Naive thymus-derived CD4-positive, alpha-beta T cell (primary cell): ENCODE measurements at regions of chr12 and their contacts with region 1.

Region 1: GRCh38 chr12:54984658-54985376 is at the start of gene TESPA1:
- DNase-seq: peak; percentile 55 to 94 (median 90)
- ATAC-seq: peak; percentile 93
- H3K4me3 ChIP-seq: peak within 1 kb of the TSS; percentile 67
- H3K4me3 Mint-ChIP-seq: peak within 1 kb of the TSS; percentile 90 to 98 (median 95)
- H3K27ac ChIP-seq: peak within 1 kb of the TSS; percentile 94
- H3K27ac Mint-ChIP-seq: peak within 1 kb of the TSS; percentile 95 to 100 (median 98)
- H3K4me1 ChIP-seq: peaks cover 49 to 51% of the 10 kb centered on the region in 2 donors
- H3K4me1 Mint-ChIP-seq: peaks cover 45 to 78% (median 69%) of the 10 kb centered on the region in 7 donors
- H3K27me3 ChIP-seq: no peaks in the 10 kb centered on the region
- H3K27me3 Mint-ChIP-seq: no peaks in the 10 kb centered on the region
- total RNA-seq, gene TESPA1: 120 to 301 (median 186) TPM

Region 2: GRCh38 chr12:54017878-54018467 is 966.8 kb before region 1 on chr12:
- CTCF ChIA-PET with region 1: no interaction called
- POLR2A ChIA-PET with region 1: no interaction called
- intact Hi-C with region 1: no loop called
- DNase-seq: peak; percentile 50 to 73 (median 67)
- ATAC-seq: peak; percentile 86
- H3K4me3 ChIP-seq: peak overlapping the region; percentile 58
- H3K4me3 Mint-ChIP-seq: peak overlapping the region; percentile 69 to 89 (median 84)
- H3K27ac ChIP-seq: no peak overlapping the region
- H3K27ac Mint-ChIP-seq: peak overlapping the region in 2 of 9 donors; percentile 10 to 42
- H3K4me1 ChIP-seq: peaks cover 7 to 15% of the 10 kb centered on the region in 2 donors
- H3K4me1 Mint-ChIP-seq: peaks cover 6 to 33% (median 18%) of the 10 kb centered on the region in 7 donors
- H3K27me3 ChIP-seq: peaks cover 16 to 58% of the 10 kb centered on the region in 2 donors
- H3K27me3 Mint-ChIP-seq: peaks cover 68 to 92% (median 78%) of the 10 kb centered on the region in 5 donors

Region 3: GRCh38 chr12:54740882-54741281 is 243.9 kb before region 1 on chr12:
- CTCF ChIA-PET with region 1: no interaction called
- POLR2A ChIA-PET with region 1: interaction called, 15 read pairs
- intact Hi-C with region 1: no loop called
- DNase-seq: peak in 6 of 9 donors; percentile 26 to 69 (median 52)
- ATAC-seq: peak; percentile 72
- H3K4me3 ChIP-seq: no peak overlapping the region
- H3K4me3 Mint-ChIP-seq: peak overlapping the region; percentile 0 to 71 (median 56)
- H3K27ac ChIP-seq: no peak overlapping the region
- H3K27ac Mint-ChIP-seq: peak overlapping the region; percentile 16 to 81 (median 57)
- H3K4me1 ChIP-seq: peaks cover 44 to 51% of the 10 kb centered on the region in 2 donors
- H3K4me1 Mint-ChIP-seq: peaks cover 29 to 89% (median 72%) of the 10 kb centered on the region in 7 donors
- H3K27me3 ChIP-seq: no peaks in the 10 kb centered on the region
- H3K27me3 Mint-ChIP-seq: peaks cover 0 to 18% (median 0%) of the 10 kb centered on the region in 5 donors

Region 4: GRCh38 chr12:54935235-54935951 is 49.4 kb before region 1 on chr12:
- CTCF ChIA-PET with region 1: no interaction called
- POLR2A ChIA-PET with region 1: interaction called, 22 read pairs
- intact Hi-C with region 1: loop called (anchors 1 to 2 kb)
- DNase-seq: peak in 8 of 9 donors; percentile 40 to 67 (median 51)
- ATAC-seq: peak; percentile 88
- H3K4me3 ChIP-seq: no peak overlapping the region
- H3K4me3 Mint-ChIP-seq: peak overlapping the region; percentile 0 to 74 (median 62)
- H3K27ac ChIP-seq: peak overlapping the region; percentile 29
- H3K27ac Mint-ChIP-seq: peak overlapping the region; percentile 60 to 98 (median 88)
- H3K4me1 ChIP-seq: peaks cover 36 to 39% of the 10 kb centered on the region in 2 donors
- H3K4me1 Mint-ChIP-seq: peaks cover 28 to 56% (median 53%) of the 10 kb centered on the region in 7 donors
- H3K27me3 ChIP-seq: no peaks in the 10 kb centered on the region
- H3K27me3 Mint-ChIP-seq: no peaks in the 10 kb centered on the region

Region 5: DNA sequence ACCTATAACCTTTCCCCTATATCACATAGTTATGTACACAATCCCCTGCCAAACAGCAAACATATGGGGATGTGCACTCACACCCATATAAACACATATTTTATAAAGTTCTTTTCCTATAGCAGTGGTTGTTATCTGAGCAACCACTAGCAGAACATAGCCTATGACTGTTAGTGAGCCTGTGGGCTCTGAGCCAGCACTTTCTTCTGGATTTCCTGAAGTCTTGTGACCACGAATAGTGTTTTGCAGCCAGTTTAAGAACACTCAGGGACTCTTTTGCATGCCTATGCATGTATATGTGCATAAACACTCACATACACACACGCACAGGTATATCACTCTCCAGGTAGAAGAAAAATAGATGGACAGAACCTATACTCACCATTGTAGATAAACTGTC is 17.4 kb before region 1 on chr12:
- CTCF ChIA-PET with region 1: interaction called, 5 read pairs
- POLR2A ChIA-PET with region 1: interaction called, 309 read pairs
- intact Hi-C with region 1: loop called (anchors 1 to 2 kb)
- DNase-seq: peak in 5 of 9 donors; percentile 37 to 60 (median 49)
- ATAC-seq: peak; percentile 56
- H3K4me3 ChIP-seq: peak overlapping the region; percentile 2
- H3K4me3 Mint-ChIP-seq: peak overlapping the region; percentile 38 to 88 (median 79)
- H3K27ac ChIP-seq: peak overlapping the region; percentile 57
- H3K27ac Mint-ChIP-seq: peak overlapping the region; percentile 80 to 96 (median 90)
- H3K4me1 ChIP-seq: peaks cover 15 to 65% of the 10 kb centered on the region in 2 donors
- H3K4me1 Mint-ChIP-seq: peaks cover 37 to 95% (median 94%) of the 10 kb centered on the region in 7 donors
- H3K27me3 ChIP-seq: no peaks in the 10 kb centered on the region
- H3K27me3 Mint-ChIP-seq: no peaks in the 10 kb centered on the region

Region 6: DNA sequence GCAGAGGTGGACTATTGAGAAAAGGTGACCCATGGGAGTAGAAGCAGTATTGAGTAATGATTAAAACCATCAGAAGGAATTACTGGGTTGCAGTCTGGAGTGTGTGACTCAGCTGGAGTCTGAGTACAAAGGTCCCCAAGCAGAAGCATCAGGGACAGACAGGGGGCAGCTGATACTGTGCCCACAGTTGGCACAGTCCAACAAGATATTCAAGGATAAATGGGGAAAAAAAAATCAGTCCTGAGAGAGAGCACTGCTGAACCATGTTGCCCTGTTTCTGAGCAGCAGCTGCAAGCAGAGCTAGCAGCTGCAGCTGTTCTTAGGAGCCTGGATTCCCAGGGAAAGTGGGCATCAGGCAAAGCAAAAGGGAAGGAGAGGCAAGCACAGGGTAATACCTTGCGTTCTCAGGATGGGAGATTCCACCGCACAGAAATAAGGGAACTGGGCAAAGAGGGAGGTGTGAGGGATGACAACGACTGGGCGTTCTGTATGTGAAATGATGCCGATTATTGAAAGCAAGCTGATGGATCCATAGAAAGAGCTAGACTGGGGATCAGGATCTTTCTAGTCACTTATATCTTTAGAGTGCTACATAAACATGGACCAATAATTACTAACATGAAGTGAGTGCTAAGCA is 52.7 kb after region 1 on chr12:
- CTCF ChIA-PET with region 1: no interaction called
- POLR2A ChIA-PET with region 1: interaction called, 12 read pairs
- intact Hi-C with region 1: loop called in 1 of 2 experiments (anchors 1 kb)
- DNase-seq: no peak
- ATAC-seq: no peak
- H3K4me3 ChIP-seq: no peak overlapping the region
- H3K4me3 Mint-ChIP-seq: peak overlapping the region in 9 of 10 donors; percentile 45 to 87 (median 76)
- H3K27ac ChIP-seq: no peak overlapping the region
- H3K27ac Mint-ChIP-seq: peak overlapping the region in 8 of 9 donors; percentile 67 to 90 (median 80)
- H3K4me1 ChIP-seq: peaks cover 15 to 46% of the 10 kb centered on the region in 2 donors
- H3K4me1 Mint-ChIP-seq: peaks cover 17 to 67% (median 65%) of the 10 kb centered on the region in 7 donors
- H3K27me3 ChIP-seq: no peaks in the 10 kb centered on the region
- H3K27me3 Mint-ChIP-seq: peaks cover 0 to 29% (median 0%) of the 10 kb centered on the region in 5 donors